Ascending aorta (tissue), 2 donors: ENCODE measurements at regions of chr6 and their contacts with region 1.

Region 1: GRCh38 chr6:90098001-90098531 is 198.6 kb downstream of the BACH2 start:
- DNase-seq: peak; percentile 63 to 95
- H3K4me3 ChIP-seq: peak overlapping the region in 1 of 2 donors; percentile 9
- H3K27ac ChIP-seq: peak overlapping the region; percentile 89 to 93
- H3K4me1 ChIP-seq: peaks cover 4 to 46% of the 10 kb centered on the region in 2 donors
- H3K27me3 ChIP-seq: no peaks in the 10 kb centered on the region
- CTCF ChIP-seq: peak; percentile 26 to 59 (median 48)

Region 2: GRCh38 chr6:89999154-89999553 is 98.9 kb before region 1 on chr6:
- intact Hi-C with region 1: loop called (anchors 5 kb)
- DNase-seq: no peak
- H3K4me3 ChIP-seq: no peak overlapping the region
- H3K27ac ChIP-seq: peak overlapping the region in 1 of 2 donors; percentile 62
- H3K4me1 ChIP-seq: peaks cover 3 to 17% of the 10 kb centered on the region in 2 donors
- H3K27me3 ChIP-seq: no peaks in the 10 kb centered on the region
- CTCF ChIP-seq: no peak

Region 3: DNA sequence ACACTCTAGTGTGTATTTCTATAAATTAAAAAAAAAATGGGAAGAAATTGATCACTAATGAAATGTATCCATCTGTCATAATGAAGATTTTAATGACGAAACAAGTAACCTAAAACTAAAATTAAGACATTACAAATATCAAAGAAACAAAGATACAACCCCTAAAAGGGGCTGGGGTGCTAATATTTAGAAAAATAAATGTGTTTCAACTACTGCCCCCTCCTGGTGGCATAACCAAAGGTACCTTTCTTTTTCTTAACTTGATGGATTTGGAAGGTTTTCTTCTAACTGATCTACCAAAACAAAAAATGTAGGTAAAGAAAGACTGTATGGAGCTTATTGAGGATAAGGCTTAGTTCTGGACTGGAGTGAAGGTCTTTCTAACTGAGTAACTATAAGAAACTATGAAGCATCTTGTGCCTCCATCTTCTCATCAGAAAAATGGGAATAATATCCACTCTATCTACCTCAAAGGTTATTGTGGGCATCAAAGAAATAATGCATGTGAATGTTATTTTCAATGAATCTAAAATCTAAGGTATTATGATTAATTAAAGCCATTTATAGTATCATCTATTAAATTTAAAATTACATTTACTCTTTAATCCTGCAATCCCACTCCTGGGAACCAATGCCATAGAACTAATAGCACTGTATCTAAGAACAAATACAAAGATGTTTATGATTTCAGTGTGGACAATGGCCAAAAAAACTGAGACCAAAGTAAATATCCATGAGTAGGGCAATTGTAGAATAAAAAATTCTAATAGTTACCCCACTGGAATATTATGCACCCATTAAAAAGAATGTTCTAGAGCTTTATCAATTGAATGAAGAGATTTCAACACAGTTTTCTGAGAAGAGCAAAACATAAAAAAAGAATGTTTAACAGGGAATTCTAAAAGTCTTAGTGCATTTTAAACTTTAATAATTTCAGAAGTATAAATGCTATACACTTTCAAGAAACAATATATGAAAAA is 81.4 kb after region 1 on chr6:
- intact Hi-C with region 1: loop called (anchors 5 kb)
- DNase-seq: no peak
- H3K4me3 ChIP-seq: no peak overlapping the region
- H3K27ac ChIP-seq: no peak overlapping the region
- H3K4me1 ChIP-seq: peaks cover 5 to 25% of the 10 kb centered on the region in 2 donors
- H3K27me3 ChIP-seq: no peaks in the 10 kb centered on the region
- CTCF ChIP-seq: peak in 1 of 3 experiments; percentile 47

Region 4: GRCh38 chr6:90375681-90376439 is 277.8 kb after region 1 on chr6:
- intact Hi-C with region 1: loop called (anchors 2 kb)
- DNase-seq: peak; percentile 18 to 82
- H3K4me3 ChIP-seq: no peak overlapping the region
- H3K27ac ChIP-seq: peak overlapping the region; percentile 66 to 77
- H3K4me1 ChIP-seq: peaks cover 4 to 14% of the 10 kb centered on the region in 2 donors
- H3K27me3 ChIP-seq: no peaks in the 10 kb centered on the region
- CTCF ChIP-seq: no peak

Region 5: GRCh38 chr6:90478789-90479602 is 380.9 kb after region 1 on chr6:
- intact Hi-C with region 1: loop called (anchors 5 kb)
- DNase-seq: peak; percentile 75 to 94
- H3K4me3 ChIP-seq: no peak overlapping the region
- H3K27ac ChIP-seq: no peak overlapping the region
- H3K4me1 ChIP-seq: no peaks in the 10 kb centered on the region
- H3K27me3 ChIP-seq: no peaks in the 10 kb centered on the region
- CTCF ChIP-seq: peak; percentile 83 to 89 (median 83)